Right cardiac atrium (tissue), 5 donors: ENCODE measurements at regions of chr19 and their contacts with region 1.

Region 1: GRCh38 chr19:53424968-53425597 is 6.7 kb upstream of the ZNF761 start:
- DNase-seq: peak; percentile 75 to 88 (median 81)
- ATAC-seq: peak; percentile 90 to 92
- H3K4me3 ChIP-seq: no peak overlapping the region
- H3K27ac ChIP-seq: no peak overlapping the region
- H3K4me1 ChIP-seq: peaks cover 1% of the 10 kb centered on the region
- H3K27me3 ChIP-seq: no peaks in the 10 kb centered on the region

Region 2: DNA sequence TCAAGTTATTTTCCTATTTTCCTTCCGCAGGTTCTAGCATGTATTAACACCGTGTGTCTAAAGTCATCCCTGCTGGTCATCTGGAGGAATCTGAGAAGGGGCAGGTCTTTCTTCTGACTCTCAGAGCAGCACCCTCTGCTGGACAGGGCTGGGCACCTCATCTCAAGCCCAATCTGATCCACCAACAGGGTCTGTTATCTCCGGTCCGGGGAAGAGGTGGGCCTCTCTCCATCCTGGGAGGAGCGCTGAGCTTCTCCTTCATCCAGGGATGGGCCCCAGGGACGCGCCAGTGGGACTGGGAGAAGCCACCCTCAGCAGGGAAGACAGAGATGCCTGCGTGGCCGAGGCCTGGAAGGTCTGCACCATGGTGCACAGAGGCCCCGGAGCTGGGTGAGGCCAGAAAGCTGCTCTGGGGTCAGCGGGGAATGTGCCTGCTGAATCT is 86.9 kb after region 1 on chr19:
- intact Hi-C with region 1: loop called in 1 of 4 experiments (anchors 10 kb)
- DNase-seq: peak; percentile 45 to 78 (median 76)
- ATAC-seq: peak; percentile 64 to 85
- H3K4me3 ChIP-seq: no peak overlapping the region
- H3K27ac ChIP-seq: no peak overlapping the region
- H3K4me1 ChIP-seq: no peaks in the 10 kb centered on the region
- H3K27me3 ChIP-seq: no peaks in the 10 kb centered on the region